ENCODE measurements at regions of chr12 and their contacts with region 1.

Region 1: GRCh38 chr12:57012600-57013465 is 3.5 kb downstream of the TAC3 start:
- DNase-seq: no peak
- H3K4me3 ChIP-seq: no peak overlapping the region
- H3K27ac ChIP-seq: no peak overlapping the region
- H3K4me1 ChIP-seq: peaks cover 0 to 7% of the 10 kb centered on the region in 2 donors
- H3K27me3 ChIP-seq: no peaks in the 10 kb centered on the region
- CTCF ChIP-seq: no peak
- POLR2A ChIP-seq: no peak

Region 2: DNA sequence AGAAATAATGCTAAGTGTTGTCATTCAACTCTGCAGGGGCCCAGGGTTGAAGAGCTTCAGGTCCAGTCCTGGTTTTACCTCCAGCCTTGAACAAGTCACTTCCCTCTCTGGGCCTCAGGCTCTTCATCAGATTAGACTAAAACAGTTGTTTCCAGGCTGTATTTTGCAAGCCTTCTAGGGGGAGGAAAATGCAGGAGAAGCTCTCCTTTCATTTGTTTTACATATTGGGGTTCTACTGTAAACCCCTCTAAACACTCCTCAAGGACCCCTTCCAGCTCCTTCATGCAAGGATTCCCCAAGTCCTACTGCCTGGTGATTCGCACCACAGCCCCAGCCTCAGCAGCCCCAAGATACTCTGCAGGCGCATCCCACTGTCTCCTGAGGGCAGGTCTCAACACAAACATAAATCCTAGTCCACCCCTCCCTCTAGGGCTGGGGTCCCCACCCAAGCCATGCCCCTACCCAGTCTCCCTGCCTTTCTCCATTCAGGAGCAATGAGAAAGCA is 81.3 kb before region 1 on chr12:
- intact Hi-C with region 1: no loop called
- DNase-seq: peak in 1 of 7 donors; percentile 23
- H3K4me3 ChIP-seq: no peak overlapping the region
- H3K27ac ChIP-seq: peak overlapping the region in 2 of 5 donors; percentile 42 to 48
- H3K4me1 ChIP-seq: peaks cover 0 to 16% of the 10 kb centered on the region in 2 donors
- H3K27me3 ChIP-seq: no peaks in the 10 kb centered on the region
- CTCF ChIP-seq: no peak
- POLR2A ChIP-seq: no peak

Region 3: DNA sequence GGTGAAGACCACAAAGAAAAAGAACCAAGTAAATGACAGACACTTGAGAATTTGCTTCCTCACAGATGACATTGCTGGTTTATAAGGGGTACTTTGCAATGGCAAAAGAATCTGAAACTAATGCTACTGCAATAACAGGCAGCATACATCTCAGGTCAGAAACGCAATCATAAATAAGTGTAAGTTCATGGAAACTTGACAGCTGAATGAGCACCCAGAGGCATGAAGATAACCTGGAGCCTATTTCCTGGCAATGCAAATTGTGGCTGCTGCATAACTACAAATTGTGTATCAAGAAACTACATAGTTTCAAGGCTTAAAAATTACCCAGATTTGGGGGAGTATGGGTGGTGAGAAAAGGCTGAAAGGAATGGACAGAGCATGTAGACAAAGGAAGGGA is 45.6 kb after region 1 on chr12:
- intact Hi-C with region 1: loop called (anchors 5 kb)
- DNase-seq: no peak
- H3K4me3 ChIP-seq: no peak overlapping the region
- H3K27ac ChIP-seq: no peak overlapping the region
- H3K4me1 ChIP-seq: no peaks in the 10 kb centered on the region
- H3K27me3 ChIP-seq: no peaks in the 10 kb centered on the region
- CTCF ChIP-seq: no peak
- POLR2A ChIP-seq: no peak

Region 4: DNA sequence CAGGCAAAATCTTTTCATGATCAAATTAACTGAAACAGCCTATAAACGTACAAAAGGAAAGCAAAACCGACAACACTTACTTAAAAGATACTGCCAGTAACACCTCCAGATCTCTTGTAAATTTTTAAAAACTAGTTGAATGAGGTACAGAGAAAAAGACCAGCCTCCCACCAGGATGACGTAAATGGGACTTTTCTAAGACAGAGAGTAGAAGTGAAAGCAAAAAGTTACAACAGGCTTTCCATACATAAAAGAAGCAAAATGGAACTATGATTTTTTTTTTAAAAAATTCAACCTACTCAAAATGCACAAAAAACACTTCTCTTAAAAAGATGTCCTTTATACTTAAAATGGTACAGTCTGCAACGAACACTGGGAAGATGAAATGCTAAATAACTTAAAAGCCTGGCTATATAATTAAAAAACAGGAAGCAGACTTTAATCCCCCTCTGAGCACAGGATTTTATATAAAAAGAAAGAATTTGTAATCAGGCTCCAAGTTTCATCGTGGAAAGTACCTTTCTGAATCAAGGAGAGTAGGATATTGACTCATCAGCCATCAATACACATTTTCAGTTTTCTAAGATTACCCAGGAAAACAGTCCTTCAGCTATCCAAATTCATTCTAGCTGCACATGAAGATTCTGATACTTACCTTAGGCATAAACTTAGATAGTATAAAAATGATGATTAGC is 51.3 kb after region 1 on chr12:
- intact Hi-C with region 1: loop called (anchors 5 kb)
- DNase-seq: no peak
- H3K4me3 ChIP-seq: no peak overlapping the region
- H3K27ac ChIP-seq: no peak overlapping the region
- H3K4me1 ChIP-seq: no peaks in the 10 kb centered on the region
- H3K27me3 ChIP-seq: no peaks in the 10 kb centered on the region
- CTCF ChIP-seq: no peak
- POLR2A ChIP-seq: no peak

Measured in adrenal gland (tissue), 19 donors.